Endothelial cell of umbilical vein (primary cell): ENCODE measurements at regions of chr7 and their contacts with region 1.

Region 1: DNA sequence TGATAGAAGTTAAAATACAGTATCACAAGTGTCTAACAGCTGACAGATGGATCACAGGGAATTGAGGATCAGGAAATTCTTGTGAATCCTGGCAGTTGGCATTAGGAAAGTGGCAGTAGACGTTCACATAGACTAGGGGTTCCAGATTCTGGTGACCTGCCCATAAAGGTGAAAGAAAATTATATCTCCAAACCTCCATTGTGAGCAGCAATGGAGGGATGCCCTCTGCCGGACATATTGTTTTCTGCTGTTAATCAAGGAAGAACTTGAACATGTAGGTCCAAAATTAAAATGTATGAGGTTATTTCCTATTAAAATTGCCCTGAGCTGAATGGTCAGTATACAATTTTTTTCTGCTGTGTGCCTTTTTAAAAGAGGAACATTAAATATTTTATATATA is 5.1 kb downstream of the NME8 start:
- DNase-seq: peak; percentile 6
- H3K4me3 ChIP-seq: no peak overlapping the region
- H3K27ac ChIP-seq: no peak overlapping the region
- H3K4me1 ChIP-seq: no peaks in the 10 kb centered on the region
- H3K27me3 ChIP-seq: no peaks in the 10 kb centered on the region
- CTCF ChIP-seq: peak; percentile 12 to 13
- POLR2A ChIP-seq: no peak

Region 2: DNA sequence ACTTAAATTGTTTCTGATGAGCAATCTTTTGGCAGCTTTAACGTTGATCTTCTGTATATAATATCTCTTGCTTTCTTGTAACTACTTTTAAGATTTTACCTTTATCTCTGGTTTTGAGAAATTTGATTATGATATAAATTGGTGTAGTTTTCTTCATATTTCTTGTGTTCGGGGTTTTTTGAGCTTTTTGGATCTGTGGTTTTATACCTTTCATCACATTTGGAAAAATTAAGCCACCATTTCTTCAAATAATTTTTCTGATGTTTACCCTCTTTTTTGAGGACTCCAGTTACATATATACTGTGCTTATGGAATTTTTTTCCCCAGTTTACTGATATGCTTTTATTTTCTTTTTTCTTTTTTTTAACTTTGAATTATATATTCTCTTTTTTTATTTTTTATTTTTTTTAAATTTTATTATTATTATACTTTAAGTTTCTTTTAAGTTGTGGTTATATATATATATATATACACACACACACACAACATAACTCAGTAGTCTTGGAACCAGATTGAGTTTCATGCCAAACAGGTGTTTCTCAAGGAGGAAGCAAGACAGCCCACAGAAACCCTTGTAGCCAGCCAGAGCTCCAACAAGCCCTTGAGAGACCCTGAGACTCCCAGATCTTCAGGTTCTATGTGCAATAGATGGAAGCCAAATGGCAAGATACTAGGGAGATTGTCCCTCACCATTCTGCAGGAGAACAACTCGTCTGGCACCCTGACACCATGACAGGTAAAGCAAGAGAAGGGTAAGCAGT is 32.6 kb before region 1 on chr7:
- CTCF ChIA-PET with region 1: no interaction called
- POLR2A ChIA-PET with region 1: no interaction called
- dilution Hi-C with region 1: no loop called
- intact Hi-C with region 1: no loop called
- DNase-seq: no peak
- H3K4me3 ChIP-seq: no peak overlapping the region
- H3K27ac ChIP-seq: no peak overlapping the region
- H3K4me1 ChIP-seq: no peaks in the 10 kb centered on the region
- H3K27me3 ChIP-seq: peaks cover 0 to 3% of the 10 kb centered on the region in 2 experiments
- CTCF ChIP-seq: no peak
- POLR2A ChIP-seq: no peak

Region 3: DNA sequence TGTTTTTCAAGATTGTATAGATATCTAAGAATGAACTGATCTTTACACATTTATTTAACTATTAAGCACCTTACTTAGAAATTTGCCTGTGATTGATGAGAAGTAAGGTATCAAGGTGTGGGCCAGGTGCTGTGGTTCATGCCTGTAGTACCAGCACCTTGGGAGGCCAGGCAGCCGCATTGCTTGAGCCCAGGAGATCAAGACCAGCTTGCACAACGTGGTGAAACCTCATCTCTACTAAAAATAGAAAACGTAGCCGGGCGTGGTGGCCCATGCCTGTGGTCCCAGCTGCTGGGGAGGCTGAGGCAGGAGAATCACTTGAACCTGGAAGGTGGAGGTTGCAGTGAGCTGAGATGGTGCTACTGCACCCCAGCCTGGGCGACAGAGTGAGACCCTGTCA is 28.6 kb after region 1 on chr7:
- CTCF ChIA-PET with region 1: no interaction called
- POLR2A ChIA-PET with region 1: no interaction called
- dilution Hi-C with region 1: no loop called
- intact Hi-C with region 1: no loop called
- DNase-seq: no peak
- H3K4me3 ChIP-seq: no peak overlapping the region
- H3K27ac ChIP-seq: no peak overlapping the region
- H3K4me1 ChIP-seq: no peaks in the 10 kb centered on the region
- H3K27me3 ChIP-seq: no peaks in the 10 kb centered on the region
- CTCF ChIP-seq: no peak
- POLR2A ChIP-seq: no peak

Region 4: GRCh38 chr7:37893359-37893758 is 39.9 kb after region 1 on chr7:
- CTCF ChIA-PET with region 1: no interaction called
- POLR2A ChIA-PET with region 1: no interaction called
- dilution Hi-C with region 1: no loop called
- intact Hi-C with region 1: loop called (anchors 1 kb)
- DNase-seq: no peak
- H3K4me3 ChIP-seq: no peak overlapping the region
- H3K27ac ChIP-seq: no peak overlapping the region
- H3K4me1 ChIP-seq: no peaks in the 10 kb centered on the region
- H3K27me3 ChIP-seq: no peaks in the 10 kb centered on the region
- CTCF ChIP-seq: no peak
- POLR2A ChIP-seq: no peak